Heart right ventricle (tissue), 16 donors: ENCODE measurements at regions of chr20 and their contacts with region 1.

Region 1: DNA sequence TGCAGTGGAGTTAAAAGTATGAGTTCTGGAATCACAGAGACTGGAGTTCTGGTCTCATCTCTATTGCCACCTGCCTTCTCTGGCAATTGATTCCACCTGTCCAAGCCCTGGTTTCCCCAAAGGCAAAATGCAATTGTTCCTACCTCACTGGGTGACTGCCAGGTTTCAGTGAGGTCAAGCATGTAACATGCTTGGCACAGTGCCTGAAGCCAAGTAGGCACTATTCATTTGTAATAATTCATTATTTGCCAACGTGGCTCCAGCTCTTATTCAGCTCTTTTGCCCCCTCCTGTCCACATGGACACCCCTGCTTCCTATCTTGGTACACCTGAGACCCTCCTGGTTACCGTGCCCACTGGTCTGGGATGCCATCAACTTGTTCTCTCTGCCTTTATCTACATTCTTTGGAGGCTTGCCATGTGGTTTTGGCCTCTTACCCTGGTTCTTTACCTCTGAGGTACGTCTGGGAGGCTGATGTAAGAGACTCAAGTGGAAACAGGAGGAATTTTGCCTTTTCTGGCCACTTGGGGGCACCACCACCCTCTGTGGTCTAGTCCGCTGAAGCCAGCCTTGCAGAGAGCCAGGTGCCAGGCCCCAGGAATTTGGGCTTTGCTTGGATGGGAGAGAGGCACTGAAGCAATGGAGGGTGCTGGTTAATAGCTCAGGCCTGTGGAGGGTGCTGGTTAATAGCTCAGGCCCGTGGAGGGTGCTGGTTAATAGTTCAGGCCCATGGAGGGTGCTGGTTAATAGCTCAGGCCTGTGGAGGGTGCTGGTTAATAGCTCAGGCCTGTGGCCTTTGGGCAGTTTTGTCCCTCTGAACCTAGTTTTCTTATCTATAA is 1.7 kb downstream of the KCNK15 start:
- DNase-seq: peak; percentile 61 to 71
- ATAC-seq: peak; percentile 20 to 76 (median 57)
- H3K4me3 ChIP-seq: no peak overlapping the region
- H3K27ac ChIP-seq: no peak overlapping the region
- H3K4me1 ChIP-seq: peaks cover 0 to 37% (median 13%) of the 10 kb centered on the region in 9 donors
- H3K27me3 ChIP-seq: peaks cover 6 to 52% (median 18%) of the 10 kb centered on the region in 7 donors
- CTCF ChIP-seq: peak; percentile 59 to 81 (median 70)

Region 2: DNA sequence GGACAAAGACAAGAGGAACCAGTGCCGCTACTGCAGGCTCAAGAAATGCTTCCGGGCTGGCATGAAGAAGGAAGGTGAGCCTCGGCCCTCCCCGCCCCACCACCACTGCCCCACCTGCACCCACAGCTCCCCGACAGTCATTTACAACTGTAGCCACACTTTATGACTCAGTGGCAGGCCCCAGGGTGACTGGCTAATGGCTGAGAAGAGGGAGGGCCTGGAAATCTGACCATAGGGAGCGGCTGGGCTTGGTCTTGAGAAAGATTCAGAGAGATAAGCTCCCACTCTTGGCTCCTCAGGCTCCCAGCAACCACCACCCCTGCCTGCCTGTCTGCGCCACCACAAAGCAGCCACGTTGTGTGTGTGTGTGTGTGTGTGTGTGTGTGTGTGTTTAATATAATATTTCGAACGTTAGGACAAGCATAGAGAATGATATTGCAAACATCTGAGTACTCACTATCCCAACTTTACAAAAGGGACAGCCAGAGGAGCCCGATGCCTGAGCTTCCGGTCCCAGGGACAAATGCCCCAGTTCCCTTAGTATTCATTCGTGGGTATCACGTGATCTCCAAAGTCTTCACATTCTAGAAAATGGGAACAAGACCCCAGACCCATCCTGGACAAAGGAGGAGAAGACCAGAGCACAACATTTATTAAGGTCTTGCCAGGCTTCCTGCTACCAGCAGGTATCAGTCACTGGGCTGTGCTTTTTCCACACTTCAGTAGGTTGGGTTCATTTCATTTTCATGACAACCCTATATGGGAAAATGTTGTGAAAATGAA is 339.8 kb before region 1 on chr20:
- intact Hi-C with region 1: no loop called
- DNase-seq: no peak
- ATAC-seq: no peak
- H3K4me3 ChIP-seq: no peak overlapping the region
- H3K27ac ChIP-seq: no peak overlapping the region
- H3K4me1 ChIP-seq: no peaks in the 10 kb centered on the region
- H3K27me3 ChIP-seq: peaks cover 0 to 28% (median 11%) of the 10 kb centered on the region in 7 donors
- CTCF ChIP-seq: no peak

Region 3: DNA sequence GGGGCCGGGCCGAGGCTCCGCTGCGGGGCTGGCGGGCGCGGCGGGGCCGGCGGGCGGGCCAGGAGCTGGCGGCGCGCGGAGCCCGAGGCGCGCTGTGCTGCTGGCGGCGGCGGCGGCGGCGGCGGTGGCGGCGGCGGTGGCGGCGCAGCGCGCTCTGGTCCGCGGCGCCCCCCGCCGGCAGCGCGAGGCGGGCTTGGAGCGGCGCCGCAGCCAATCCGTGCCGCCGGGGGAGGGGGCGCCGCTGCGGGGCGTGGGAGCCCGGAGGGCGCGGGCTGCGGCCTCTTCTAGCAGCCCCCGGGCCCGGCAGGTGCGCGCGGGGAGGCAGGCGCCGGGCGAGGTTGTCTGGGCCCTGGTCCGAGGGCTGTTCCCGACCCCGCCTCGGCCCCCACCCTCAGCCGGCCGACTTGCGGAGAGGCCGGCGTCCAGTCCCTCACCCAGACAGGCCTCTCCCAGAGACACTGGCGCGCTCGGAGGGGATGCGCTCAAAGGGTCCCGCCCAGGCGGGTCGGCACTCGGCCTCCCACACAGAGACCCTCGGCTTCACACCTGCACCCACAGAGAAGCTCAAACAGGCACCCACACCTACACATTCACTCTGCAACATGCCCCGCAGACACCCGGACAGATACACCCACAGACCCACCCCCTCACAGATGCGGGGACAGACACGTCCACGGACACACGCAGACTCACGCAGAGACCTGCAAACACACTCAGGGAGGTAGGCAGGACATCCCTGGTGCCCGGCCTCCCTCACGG is 63.2 kb after region 1 on chr20 and contains the start of gene RIMS4:
- intact Hi-C with region 1: loop called in 1 of 10 experiments (anchors 5 kb)
- DNase-seq: no peak
- ATAC-seq: peak in 1 of 8 donors; percentile 43
- H3K4me3 ChIP-seq: peak within 1 kb of the TSS in 7 of 10 donors; percentile 7 to 41 (median 22)
- H3K27ac ChIP-seq: no peak within 1 kb of the TSS
- H3K4me1 ChIP-seq: peaks cover 0 to 5% (median 0%) of the 10 kb centered on the region in 9 donors
- H3K27me3 ChIP-seq: peaks cover 8 to 68% (median 58%) of the 10 kb centered on the region in 7 donors
- CTCF ChIP-seq: no peak
- total RNA-seq, gene RIMS4: 0.05 to 0.42 (median 0.18) TPM in 6 of 10 donors, not detected in the others

Region 4: DNA sequence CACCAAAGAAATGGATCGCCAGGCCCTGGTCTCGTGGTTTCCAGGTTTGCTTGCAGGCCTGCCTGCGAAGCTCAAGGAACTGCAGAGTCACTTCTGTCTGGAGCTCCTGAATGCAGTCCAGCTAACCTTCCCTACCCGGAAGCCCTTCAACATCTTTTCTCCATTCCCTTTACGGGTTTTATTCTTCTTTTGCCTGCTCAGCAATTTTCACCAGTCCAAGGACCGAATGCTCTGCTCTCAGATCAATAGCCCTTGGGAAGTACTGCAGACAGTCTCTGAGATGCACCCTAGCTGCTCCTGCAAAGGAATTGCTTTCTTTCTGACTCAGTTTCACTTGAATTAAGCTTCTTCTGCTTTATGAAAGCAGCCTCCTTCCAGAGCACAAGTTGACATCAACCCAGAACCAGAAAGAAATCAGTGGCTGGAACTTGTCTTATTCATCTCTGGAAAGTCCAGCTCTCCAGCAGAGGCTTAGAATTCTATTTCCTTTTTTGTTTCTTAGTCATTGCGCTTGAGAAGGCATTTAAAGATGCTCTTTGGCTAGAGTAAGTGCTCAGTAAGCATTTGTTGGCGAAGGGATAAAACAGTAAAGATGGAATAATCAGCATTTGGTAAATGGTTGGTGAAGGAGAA is 119.4 kb after region 1 on chr20:
- intact Hi-C with region 1: loop called (anchors 1 to 5 kb)
- DNase-seq: no peak
- ATAC-seq: no peak
- H3K4me3 ChIP-seq: no peak overlapping the region
- H3K27ac ChIP-seq: no peak overlapping the region
- H3K4me1 ChIP-seq: peaks cover 0 to 30% (median 14%) of the 10 kb centered on the region in 9 donors
- H3K27me3 ChIP-seq: peaks cover 0 to 5% (median 0%) of the 10 kb centered on the region in 7 donors
- CTCF ChIP-seq: no peak

Region 5: GRCh38 chr20:44966030-44966961 is 218.9 kb after region 1 on chr20 and contains the start of gene STK4:
- intact Hi-C with region 1: loop called in 1 of 10 experiments (anchors 10 kb)
- DNase-seq: peak; percentile 93 to 95
- ATAC-seq: peak; percentile 98 to 99 (median 98)
- H3K4me3 ChIP-seq: peak within 1 kb of the TSS; percentile 63 to 92 (median 86)
- H3K27ac ChIP-seq: peak within 1 kb of the TSS; percentile 58 to 97 (median 84)
- H3K4me1 ChIP-seq: peaks cover 5 to 50% (median 17%) of the 10 kb centered on the region in 9 donors
- H3K27me3 ChIP-seq: no peaks in the 10 kb centered on the region
- CTCF ChIP-seq: peak in 8 of 9 donors; percentile 32 to 70 (median 56)
- total RNA-seq, gene STK4: 7.7 to 18.1 (median 8.2) TPM